Tibial artery (tissue), 4 donors: ENCODE measurements at regions of chr13 and their contacts with region 1.

Region 1: DNA sequence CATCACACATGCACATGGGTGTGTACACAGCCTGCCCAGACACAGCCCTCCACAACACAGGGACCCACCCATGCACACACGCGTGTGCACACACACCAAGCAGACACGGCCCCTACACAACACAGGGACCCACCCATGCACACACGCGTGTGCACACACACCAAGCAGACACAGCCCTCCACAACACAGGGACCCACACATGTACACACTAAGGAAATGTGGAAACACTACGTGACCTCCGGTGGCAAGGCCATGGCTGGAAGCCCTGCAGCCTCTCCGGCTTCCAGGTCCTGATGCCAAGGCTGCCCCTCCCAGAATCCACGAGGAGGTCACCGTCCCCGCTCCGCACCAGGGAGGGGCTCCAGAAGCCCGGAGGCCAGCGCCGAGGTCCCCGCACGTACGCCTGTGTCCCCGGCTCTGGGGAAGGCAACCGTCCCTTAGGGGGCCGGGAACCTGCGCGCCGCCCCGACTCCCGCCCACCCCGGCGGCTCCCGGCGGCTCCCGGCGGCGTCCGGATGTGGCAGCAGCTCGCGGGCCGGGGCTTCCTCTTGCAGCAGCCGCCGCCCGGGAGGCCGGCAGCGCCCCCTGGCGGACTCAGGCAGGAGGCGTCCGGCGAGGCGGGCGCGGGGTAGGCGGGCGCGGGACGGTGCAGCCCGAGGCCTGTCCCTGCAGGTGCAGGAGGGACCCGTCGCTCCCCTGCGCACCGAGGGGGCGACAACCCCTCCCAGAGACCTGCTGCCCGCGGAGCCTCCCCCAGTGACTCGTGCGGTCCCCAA is 29.8 kb upstream of the GRTP1 start:
- DNase-seq: peak; percentile 77 to 85
- H3K4me3 ChIP-seq: peak overlapping the region; percentile 64 to 71
- H3K27ac ChIP-seq: peak overlapping the region; percentile 43 to 59
- H3K4me1 ChIP-seq: peaks cover 0 to 21% (median 15%) of the 10 kb centered on the region in 4 donors
- H3K27me3 ChIP-seq: no peaks in the 10 kb centered on the region
- CTCF ChIP-seq: peak; percentile 92 to 94

Region 2: GRCh38 chr13:113098162-113098732 is 295.5 kb before region 1 on chr13:
- intact Hi-C with region 1: no loop called
- DNase-seq: no peak
- H3K4me3 ChIP-seq: no peak overlapping the region
- H3K27ac ChIP-seq: no peak overlapping the region
- H3K4me1 ChIP-seq: no peaks in the 10 kb centered on the region
- H3K27me3 ChIP-seq: peaks cover 0 to 10% of the 10 kb centered on the region in 2 donors
- CTCF ChIP-seq: no peak

Region 3: GRCh38 chr13:113208424-113209335 is 185.1 kb before region 1 on chr13 and contains the start of gene PCID2:
- intact Hi-C with region 1: no loop called
- DNase-seq: peak; percentile 88 to 92
- H3K4me3 ChIP-seq: peak within 1 kb of the TSS; percentile 80 to 99
- H3K27ac ChIP-seq: peak within 1 kb of the TSS; percentile 97 to 98
- H3K4me1 ChIP-seq: peaks cover 0 to 59% (median 44%) of the 10 kb centered on the region in 4 donors
- H3K27me3 ChIP-seq: no peaks in the 10 kb centered on the region
- CTCF ChIP-seq: no peak

Region 4: GRCh38 chr13:113458253-113459065 is 64.7 kb after region 1 on chr13:
- intact Hi-C with region 1: loop called (anchors 5 kb)
- DNase-seq: no peak
- H3K4me3 ChIP-seq: no peak overlapping the region
- H3K27ac ChIP-seq: no peak overlapping the region
- H3K4me1 ChIP-seq: no peaks in the 10 kb centered on the region
- H3K27me3 ChIP-seq: no peaks in the 10 kb centered on the region
- CTCF ChIP-seq: no peak